ENCODE measurements at regions of chr10 and their contacts with region 1.

Region 1: DNA sequence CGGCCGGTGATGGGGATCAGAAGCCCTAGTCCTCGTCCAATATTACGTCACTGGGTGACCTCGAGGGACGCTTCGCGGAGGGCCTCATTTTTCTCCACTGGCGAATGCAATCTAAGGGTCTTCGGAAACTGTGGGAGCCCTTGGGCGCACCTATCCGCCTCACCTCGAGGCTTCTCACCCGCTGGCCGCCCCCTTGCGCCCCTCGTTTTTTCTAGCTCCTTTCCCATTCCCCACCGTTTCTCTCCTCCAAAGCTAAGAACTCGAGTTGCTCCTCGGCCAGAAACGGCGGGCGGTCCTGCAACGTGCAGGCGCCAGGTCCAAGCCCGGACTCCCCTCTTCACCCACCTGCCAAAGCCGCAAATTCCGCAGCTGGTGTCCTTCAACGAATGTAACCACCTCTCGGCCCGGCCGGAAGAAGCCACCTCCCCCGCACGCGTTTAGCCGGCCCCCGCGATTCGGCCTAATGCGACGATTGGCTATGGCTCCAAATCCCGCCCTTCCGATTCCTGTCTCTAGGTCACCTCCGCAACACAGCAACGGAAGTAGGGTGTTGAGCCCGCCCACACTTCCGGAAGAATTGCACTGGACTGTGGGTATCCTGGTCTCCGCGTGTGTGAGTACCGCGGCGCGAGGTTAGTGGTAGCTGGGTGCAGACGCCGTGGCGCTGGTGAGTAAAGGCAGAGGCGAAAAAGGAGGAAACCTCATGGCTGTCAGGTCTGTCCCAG is at the starts of genes ATP5MK and PDCD11:
- DNase-seq: peak; percentile 99
- H3K4me3 ChIP-seq: peak within 1 kb of the TSS; percentile 68 to 91 (median 86)
- H3K27ac ChIP-seq: peak within 1 kb of the TSS; percentile 69
- H3K4me1 ChIP-seq: peaks cover 9% of the 10 kb centered on the region
- H3K27me3 ChIP-seq: no peaks in the 10 kb centered on the region
- CTCF ChIP-seq: peak in 1 of 2 donors; percentile 40
- total RNA-seq, gene ATP5MK: 152 to 387 TPM
- total RNA-seq, gene PDCD11: 53.2 to 77.1 TPM

Region 2: GRCh38 chr10:103355906-103356599 is 40.2 kb before region 1 on chr10:
- CTCF ChIA-PET with region 1: no interaction called
- dilution Hi-C with region 1: no loop called
- in situ Hi-C with region 1: no loop called
- intact Hi-C with region 1: loop called (anchors 1 kb)
- DNase-seq: no peak
- H3K4me3 ChIP-seq: no peak overlapping the region
- H3K27ac ChIP-seq: peak overlapping the region; percentile 15
- H3K4me1 ChIP-seq: peaks cover 2% of the 10 kb centered on the region
- H3K27me3 ChIP-seq: no peaks in the 10 kb centered on the region
- CTCF ChIP-seq: no peak

Region 3: DNA sequence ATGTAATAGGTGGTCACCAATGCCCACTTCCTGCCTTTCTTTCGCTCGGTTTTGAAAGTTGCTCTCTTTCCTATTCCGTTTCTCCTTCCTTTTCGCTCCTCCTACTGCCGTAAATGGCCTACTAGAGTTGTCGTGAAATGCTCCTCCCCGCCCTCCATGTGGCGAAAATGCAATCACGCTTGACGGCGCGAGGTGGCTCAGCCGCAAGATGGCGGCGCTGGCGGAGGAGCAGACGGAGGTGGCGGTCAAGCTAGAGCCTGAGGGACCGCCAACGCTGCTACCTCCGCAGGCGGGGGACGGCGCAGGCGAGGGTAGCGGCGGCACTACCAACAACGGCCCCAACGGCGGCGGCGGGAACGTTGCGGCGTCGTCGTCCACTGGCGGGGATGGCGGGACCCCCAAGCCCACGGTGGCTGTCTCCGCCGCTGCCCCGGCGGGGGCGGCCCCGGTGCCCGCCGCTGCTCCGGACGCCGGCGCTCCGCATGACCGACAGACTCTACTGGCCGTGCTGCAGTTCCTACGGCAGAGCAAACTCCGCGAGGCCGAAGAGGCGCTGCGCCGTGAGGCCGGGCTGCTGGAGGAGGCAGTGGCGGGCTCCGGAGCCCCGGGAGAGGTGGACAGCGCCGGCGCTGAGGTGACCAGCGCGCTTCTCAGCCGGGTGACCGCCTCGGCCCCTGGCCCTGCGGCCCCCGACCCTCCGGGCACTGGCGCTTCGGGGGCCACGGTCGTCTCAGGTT is 28.3 kb before region 1 on chr10 and contains the start of gene TAF5:
- CTCF ChIA-PET with region 1: no interaction called
- dilution Hi-C with region 1: no loop called
- in situ Hi-C with region 1: no loop called
- intact Hi-C with region 1: loop called (anchors 1 kb)
- DNase-seq: peak; percentile 93
- H3K4me3 ChIP-seq: peak within 1 kb of the TSS; percentile 76 to 93 (median 88)
- H3K27ac ChIP-seq: peak within 1 kb of the TSS; percentile 23
- H3K4me1 ChIP-seq: peaks cover 8% of the 10 kb centered on the region
- H3K27me3 ChIP-seq: no peaks in the 10 kb centered on the region
- CTCF ChIP-seq: no peak
- total RNA-seq, gene TAF5: 2.8 to 4.3 TPM

Region 4: GRCh38 chr10:103433858-103434257 is 37.6 kb after region 1 on chr10:
- CTCF ChIA-PET with region 1: no interaction called
- dilution Hi-C with region 1: loop called (anchors 5 kb)
- in situ Hi-C with region 1: no loop called
- intact Hi-C with region 1: no loop called
- DNase-seq: no peak
- H3K4me3 ChIP-seq: no peak overlapping the region
- H3K27ac ChIP-seq: no peak overlapping the region
- H3K4me1 ChIP-seq: no peaks in the 10 kb centered on the region
- H3K27me3 ChIP-seq: no peaks in the 10 kb centered on the region
- CTCF ChIP-seq: no peak

Region 5: DNA sequence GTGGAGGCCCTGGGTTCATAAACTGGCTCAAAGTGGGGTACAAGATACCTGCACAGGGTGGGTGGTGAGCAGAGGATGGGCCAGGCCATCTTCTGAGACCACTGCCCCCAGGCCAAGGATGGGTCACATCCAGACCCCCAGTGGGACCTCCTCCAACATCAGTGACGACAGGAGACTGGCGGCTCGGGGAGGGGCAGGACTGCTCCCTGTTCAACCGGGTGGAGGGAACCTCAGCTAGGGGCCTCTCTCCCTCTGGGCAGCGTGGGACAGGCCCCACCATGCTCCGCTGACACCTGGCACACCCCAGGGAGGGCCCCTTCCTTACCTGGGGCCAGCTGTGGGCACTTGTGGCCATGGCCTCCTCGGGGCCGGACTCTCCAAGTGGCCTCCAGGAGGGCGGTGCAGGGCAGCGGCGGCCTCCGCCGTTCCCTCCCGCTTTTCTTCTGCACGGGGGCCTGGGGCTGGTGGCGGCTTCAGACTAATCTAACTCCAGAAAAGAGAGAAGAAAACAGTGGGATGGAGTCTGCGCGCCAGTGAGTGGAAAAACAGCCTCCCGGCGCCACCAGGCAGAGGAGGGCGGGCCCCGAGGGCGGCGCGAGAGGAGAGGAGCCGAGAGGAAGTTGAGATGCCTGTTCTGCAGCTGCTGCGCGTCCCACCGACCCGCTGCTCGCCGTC is 55.7 kb after region 1 on chr10 and contains the start of gene CALHM2:
- CTCF ChIA-PET with region 1: no interaction called
- dilution Hi-C with region 1: loop called (anchors 10 kb)
- in situ Hi-C with region 1: no loop called
- intact Hi-C with region 1: no loop called
- DNase-seq: peak; percentile 27
- H3K4me3 ChIP-seq: peak within 1 kb of the TSS; percentile 47 to 54 (median 53)
- H3K27ac ChIP-seq: no peak within 1 kb of the TSS
- H3K4me1 ChIP-seq: peaks cover 32% of the 10 kb centered on the region
- H3K27me3 ChIP-seq: no peaks in the 10 kb centered on the region
- CTCF ChIP-seq: no peak
- total RNA-seq, gene CALHM2: 3.2 to 4.8 TPM

Measured in mammary epithelial cell (primary cell).